ENCODE measurements at regions of chr14 and their contacts with region 1.

Region 1: GRCh38 chr14:34227834-34228649 is 234.0 kb downstream of the SPTSSA start:
- DNase-seq: peak; percentile 49 to 75
- ATAC-seq: peak; percentile 98 to 99
- H3K4me3 ChIP-seq: no peak overlapping the region
- H3K27ac ChIP-seq: no peak overlapping the region
- H3K4me1 ChIP-seq: peaks cover 5% of the 10 kb centered on the region; the same call in 2 of the 3 replicates
- CTCF ChIP-seq: peak; percentile 81
- EP300 ChIP-seq: no peak
- POLR2A ChIP-seq: no peak
- RAD21 ChIP-seq: peak; percentile 88 to 90

Region 2: GRCh38 chr14:33839193-33840076 is 388.6 kb before region 1 on chr14:
- CTCF ChIA-PET with region 1: interaction called, 19 read pairs
- POLR2A ChIA-PET with region 1: no interaction called
- DNase-seq: peak; percentile 40 to 42
- ATAC-seq: peak; percentile 87
- H3K4me3 ChIP-seq: no peak overlapping the region
- H3K27ac ChIP-seq: no peak overlapping the region
- H3K4me1 ChIP-seq: 0 out of 3 replicates have a peak, but pooled peaks cover 5% of the 10 kb centered on the region
- CTCF ChIP-seq: peak; percentile 81
- EP300 ChIP-seq: no peak
- POLR2A ChIP-seq: no peak
- RAD21 ChIP-seq: peak; percentile 77 to 87

Region 3: DNA sequence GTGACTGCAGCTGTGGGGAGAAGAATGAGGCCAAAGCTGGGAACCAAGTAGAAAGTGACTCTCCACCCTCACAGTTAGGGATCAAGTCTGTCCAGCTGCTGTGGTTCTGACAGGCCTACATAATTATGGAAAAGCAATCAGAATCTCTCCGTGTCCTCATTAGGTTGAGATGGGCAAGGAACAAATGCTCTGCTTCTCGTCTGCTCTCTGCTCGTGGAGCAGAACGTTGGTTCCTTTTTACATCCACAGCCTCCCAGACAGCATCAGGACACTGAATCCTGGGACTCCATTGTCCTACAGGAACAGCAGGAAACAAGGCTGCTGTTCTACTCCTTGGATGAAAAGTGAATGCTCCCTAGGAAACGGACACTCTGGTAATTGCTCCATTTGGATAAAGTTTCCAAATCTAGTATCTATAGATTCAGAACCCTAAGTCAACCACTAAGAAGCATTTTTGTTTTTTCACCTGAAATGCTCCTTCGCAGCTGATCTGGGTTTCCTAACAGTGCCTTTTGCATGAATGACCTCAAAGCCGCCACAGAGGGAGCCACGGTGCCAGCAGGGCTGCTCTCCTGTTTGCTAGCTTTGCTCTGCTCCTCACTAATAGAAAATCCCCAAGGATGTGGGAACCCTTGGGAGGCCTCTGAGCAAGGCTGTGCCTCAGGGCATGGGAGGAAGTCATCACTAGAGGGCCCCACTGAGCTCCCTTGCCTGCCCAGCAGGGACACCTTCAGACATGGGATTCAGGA is 379.2 kb before region 1 on chr14:
- CTCF ChIA-PET with region 1: interaction called, 19 read pairs
- POLR2A ChIA-PET with region 1: no interaction called
- DNase-seq: peak; percentile 51 to 73
- ATAC-seq: peak; percentile 92 to 98
- H3K4me3 ChIP-seq: no peak overlapping the region
- H3K27ac ChIP-seq: no peak overlapping the region
- H3K4me1 ChIP-seq: no peaks in the 10 kb centered on the region
- CTCF ChIP-seq: peak; percentile 56
- EP300 ChIP-seq: no peak
- POLR2A ChIP-seq: no peak
- RAD21 ChIP-seq: peak; percentile 63 to 69

Region 4: DNA sequence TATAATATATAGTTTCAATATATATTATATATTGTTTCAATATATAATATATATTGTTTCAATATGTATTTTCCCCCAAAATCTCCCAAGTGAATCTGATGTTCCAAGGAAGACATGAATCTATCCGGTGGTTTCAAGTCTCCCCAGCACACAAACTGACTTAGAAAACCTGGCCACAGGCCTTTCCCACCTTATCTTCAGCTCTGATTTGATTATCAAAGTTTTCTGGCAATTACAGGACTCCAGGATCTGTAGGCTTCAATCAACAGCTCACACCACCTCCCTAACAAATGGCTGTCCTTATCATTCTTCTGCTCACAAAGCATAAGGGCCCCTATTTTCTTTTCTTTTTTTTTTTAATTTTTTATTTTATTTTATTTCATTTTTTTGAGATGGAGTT is 256.7 kb after region 1 on chr14:
- CTCF ChIA-PET with region 1: no interaction called
- POLR2A ChIA-PET with region 1: no interaction called
- DNase-seq: no peak
- ATAC-seq: no peak
- H3K4me3 ChIP-seq: no peak overlapping the region
- H3K27ac ChIP-seq: no peak overlapping the region
- H3K4me1 ChIP-seq: peaks cover 4% of the 10 kb centered on the region; the same call in 1 of the 3 replicates
- CTCF ChIP-seq: no peak
- EP300 ChIP-seq: no peak
- POLR2A ChIP-seq: no peak
- RAD21 ChIP-seq: no peak